Panc1 (cell line): ENCODE measurements at regions of chr1 and their contacts with region 1.

Region 1: GRCh38 chr1:28208818-28209441 is 23.9 kb downstream of the DNAJC8 start:
- DNase-seq: peak; percentile 41
- ATAC-seq: peak; percentile 89
- H3K4me3 ChIP-seq: no peak overlapping the region
- H3K27ac ChIP-seq: no peak overlapping the region
- H3K4me1 ChIP-seq: no peaks in the 10 kb centered on the region
- H3K27me3 ChIP-seq: no peaks in the 10 kb centered on the region
- CTCF ChIP-seq: peak; percentile 78

Region 2: GRCh38 chr1:27934818-27935549 is 273.9 kb before region 1 on chr1 and contains the start of gene SMPDL3B:
- CTCF ChIA-PET with region 1: interaction called, 10 read pairs
- POLR2A ChIA-PET with region 1: no interaction called
- in situ Hi-C with region 1: no loop called
- intact Hi-C with region 1: no loop called
- DNase-seq: no peak
- ATAC-seq: peak; percentile 92
- H3K4me3 ChIP-seq: peak within 1 kb of the TSS; percentile 25 to 55
- H3K27ac ChIP-seq: no peak within 1 kb of the TSS
- H3K4me1 ChIP-seq: peaks cover 16% of the 10 kb centered on the region
- H3K27me3 ChIP-seq: no peaks in the 10 kb centered on the region
- CTCF ChIP-seq: no peak
- total RNA-seq, gene SMPDL3B: 1.5 TPM

Region 3: DNA sequence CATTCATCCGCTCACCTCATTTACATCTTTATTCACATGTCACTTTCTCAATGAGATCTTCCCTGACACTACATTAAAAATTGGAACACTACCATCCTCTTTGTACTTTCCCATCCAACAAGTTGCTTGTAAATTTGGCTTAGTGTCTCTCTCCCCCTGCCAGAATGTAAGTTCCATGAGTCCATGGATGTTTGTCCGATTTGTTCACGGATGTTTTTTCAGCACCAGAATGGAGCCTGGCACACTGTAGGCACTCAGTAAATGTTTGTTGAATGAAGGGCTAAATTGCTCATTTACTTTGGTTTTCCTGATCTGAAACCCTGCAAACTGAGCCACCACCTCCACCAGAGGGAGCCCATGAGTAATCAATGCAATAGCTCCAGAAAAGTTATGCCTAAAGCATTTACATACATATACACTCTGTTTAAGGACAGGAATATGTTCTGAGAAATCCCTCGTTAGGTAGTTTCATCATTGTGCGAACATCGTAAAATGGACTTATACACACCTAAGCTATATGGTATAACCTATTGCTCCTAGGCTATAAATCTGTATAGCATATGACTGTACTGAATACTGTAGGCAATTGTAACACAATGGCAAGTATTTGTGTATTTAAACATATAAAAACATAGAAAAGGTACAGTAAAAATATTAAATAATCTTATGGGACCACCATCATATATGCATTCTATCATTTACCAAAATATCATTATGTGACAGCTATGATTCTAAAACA is 117.7 kb before region 1 on chr1:
- CTCF ChIA-PET with region 1: interaction called, 16 read pairs
- POLR2A ChIA-PET with region 1: no interaction called
- in situ Hi-C with region 1: no loop called
- intact Hi-C with region 1: loop called (anchors 1 kb)
- DNase-seq: peak; percentile 74
- ATAC-seq: peak; percentile 46; the same call in 1 of the 2 replicates
- H3K4me3 ChIP-seq: no peak overlapping the region
- H3K27ac ChIP-seq: no peak overlapping the region
- H3K4me1 ChIP-seq: peaks cover 11% of the 10 kb centered on the region
- H3K27me3 ChIP-seq: no peaks in the 10 kb centered on the region
- CTCF ChIP-seq: peak; percentile 89